ENCODE measurements at regions of chr19 and their contacts with region 1.

Region 1: DNA sequence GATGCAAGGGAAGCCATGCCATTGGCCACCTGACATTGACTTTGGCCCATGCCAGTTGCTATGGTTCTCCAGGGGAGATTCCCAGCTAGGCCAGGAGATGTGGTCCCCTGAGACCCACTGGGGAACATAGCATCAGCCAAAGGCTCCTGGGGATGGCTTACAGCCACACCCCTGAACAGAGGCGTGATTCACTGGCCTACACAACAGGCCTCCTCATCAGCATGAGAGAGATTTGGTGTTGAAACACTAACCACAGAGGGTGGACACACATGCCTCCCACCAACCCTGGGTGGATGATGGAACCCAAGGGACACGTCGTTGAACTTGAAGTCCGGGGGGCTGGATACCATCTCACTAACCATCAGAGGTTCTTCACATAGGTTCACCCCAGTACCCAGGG is 14.4 kb downstream of the IQCN start:
- DNase-seq: no peak
- H3K4me3 ChIP-seq: no peak overlapping the region
- H3K27ac ChIP-seq: no peak overlapping the region
- H3K4me1 ChIP-seq: no peaks in the 10 kb centered on the region
- H3K27me3 ChIP-seq: no peaks in the 10 kb centered on the region
- CTCF ChIP-seq: no peak
- POLR2A ChIP-seq: no peak

Region 2: DNA sequence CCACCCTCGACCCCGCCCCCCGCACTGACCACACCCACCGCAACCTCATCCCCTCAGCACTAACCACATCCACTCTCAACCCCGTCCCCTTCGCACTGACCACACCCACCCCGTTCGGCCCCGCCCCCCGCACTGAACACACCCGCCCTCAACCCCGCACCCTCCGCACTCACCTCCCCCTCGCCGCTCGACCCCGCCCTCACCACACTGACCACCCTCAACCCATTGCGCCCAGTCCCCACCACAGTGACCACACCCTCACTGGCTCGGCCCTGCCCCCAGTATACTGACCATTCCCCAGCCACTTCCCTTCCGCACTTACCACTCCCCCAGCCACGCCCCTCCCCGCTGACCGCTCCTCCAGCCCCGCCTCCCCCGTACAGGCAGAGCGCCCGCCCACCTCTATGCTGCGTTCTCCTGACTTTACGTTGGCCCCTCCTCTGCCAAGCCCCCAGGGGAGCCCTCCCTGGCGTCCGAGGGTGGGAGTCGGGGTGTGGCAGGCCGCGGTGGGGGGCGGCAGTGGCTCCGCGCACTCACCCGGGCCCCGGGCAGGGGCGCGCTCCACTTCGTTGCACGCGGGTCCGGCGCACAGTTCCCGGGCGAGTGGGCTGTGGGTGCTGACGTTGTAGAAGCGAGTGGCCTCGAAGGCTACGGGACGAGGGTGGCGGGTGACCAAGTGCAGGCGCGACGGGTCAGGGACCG is 1362.6 kb before region 1 on chr19:
- intact Hi-C with region 1: no loop called
- DNase-seq: peak; percentile 95 to 98
- H3K4me3 ChIP-seq: peak overlapping the region; percentile 54 to 81 (median 62)
- H3K27ac ChIP-seq: peak overlapping the region; percentile 85 to 87
- H3K4me1 ChIP-seq: no peaks in the 10 kb centered on the region
- H3K27me3 ChIP-seq: no peaks in the 10 kb centered on the region
- CTCF ChIP-seq: no peak
- POLR2A ChIP-seq: no peak

Region 3: DNA sequence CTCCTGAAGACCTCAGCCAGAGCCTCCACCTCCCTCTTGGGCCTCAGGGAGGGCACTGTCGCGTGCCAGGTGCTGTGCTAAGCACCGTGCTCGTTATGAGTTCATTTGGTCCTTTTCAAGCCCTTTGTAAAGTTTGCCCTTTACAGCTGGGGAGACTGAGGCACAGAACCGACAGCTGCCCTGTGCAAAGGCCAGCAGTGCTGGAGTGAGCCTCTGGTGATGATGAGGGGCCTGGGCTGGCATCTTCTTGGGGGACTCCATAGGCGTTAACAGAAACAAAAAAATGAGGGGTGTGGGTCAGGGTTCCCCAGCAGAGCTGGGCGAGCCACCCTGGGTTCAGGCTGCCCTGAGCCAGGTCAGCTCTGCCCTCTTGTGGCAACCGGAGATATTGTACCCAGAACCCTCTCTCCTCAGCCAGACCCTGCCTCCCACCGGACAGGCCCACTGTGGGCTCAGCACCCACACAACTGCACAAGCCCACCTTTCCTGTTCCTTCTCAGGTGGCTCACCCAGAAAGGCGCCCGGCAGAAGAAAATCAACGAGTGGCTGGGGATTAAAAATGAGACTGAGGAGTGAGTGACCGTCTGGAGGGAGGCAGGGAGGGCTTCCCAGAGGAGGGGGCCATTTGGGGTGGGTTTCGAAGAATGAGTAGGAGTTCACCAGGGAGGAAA is 91.8 kb before region 1 on chr19:
- intact Hi-C with region 1: no loop called
- DNase-seq: no peak
- H3K4me3 ChIP-seq: no peak overlapping the region
- H3K27ac ChIP-seq: no peak overlapping the region
- H3K4me1 ChIP-seq: no peaks in the 10 kb centered on the region
- H3K27me3 ChIP-seq: no peaks in the 10 kb centered on the region
- CTCF ChIP-seq: peak; percentile 42 to 70 (median 70)
- POLR2A ChIP-seq: no peak

Region 4: DNA sequence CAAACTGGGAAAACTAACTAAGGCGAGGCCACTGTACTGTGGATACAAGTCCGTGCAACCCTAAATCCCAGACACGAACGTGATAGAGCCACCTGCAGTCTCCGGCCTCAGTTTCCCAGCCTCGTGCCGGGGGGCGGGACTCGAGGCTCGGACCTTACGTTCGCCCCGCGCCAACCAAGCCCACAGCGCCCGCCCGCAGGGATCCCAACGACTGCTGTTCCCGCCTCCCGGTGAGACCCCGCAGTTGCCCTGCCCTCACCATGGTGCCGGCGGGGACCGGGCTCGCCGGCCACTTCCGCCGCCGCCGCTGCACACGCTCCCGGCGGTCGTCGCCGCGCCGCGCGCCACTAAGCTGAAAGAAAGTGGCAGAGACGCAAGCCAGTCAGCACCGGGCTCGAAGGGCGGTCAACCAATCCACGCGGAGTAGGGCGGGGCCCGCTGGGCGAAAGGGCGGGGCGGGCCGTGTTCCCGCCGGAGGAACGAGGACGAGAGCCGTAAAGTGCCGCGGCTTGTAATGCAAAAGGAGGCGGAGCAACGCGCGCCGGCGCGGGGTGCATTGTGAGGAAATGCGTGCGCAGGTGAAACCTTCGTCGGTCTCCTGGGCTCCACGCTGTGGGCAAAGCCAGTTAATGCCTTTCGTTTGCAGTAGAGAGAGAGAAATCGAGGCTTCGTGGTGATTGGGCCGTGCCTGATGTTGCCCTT is 63.0 kb after region 1 on chr19 and contains the start of gene LSM4:
- intact Hi-C with region 1: no loop called
- DNase-seq: peak; percentile 98 to 99
- H3K4me3 ChIP-seq: peak within 1 kb of the TSS; percentile 71 to 90 (median 86)
- H3K27ac ChIP-seq: peak within 1 kb of the TSS; percentile 87 to 96
- H3K4me1 ChIP-seq: no peaks in the 10 kb centered on the region
- H3K27me3 ChIP-seq: no peaks in the 10 kb centered on the region
- CTCF ChIP-seq: peak in 1 of 3 donors; percentile 42
- POLR2A ChIP-seq: peak; percentile 53
- total RNA-seq, gene LSM4: 83.0 to 122 (median 120) TPM

Region 5: DNA sequence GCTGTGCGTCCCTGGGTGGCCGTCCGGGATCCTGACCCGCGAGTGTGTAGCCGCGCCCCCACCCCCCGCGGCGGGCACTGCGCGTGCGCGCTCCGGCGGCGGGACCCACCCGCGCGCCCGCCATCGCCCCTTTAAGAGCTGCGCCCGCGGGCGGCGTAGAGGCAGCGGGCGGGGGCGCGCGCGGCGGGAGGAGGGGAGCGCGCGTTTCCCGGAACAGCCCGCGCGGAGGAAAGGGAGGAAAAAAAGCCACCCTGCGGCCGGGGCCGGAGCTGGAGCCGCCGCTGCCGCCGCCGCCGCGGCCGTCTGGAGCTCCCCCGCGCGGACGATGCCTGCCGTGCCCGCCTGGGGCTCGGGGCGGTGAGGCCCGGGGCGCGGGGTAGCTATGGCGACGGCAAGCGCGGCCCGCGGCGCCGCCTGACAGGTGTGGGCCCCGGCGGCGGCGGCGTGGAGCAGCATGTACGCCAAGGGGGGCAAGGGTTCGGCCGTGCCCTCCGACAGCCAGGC is 159.4 kb after region 1 on chr19 and contains the start of gene SSBP4:
- intact Hi-C with region 1: loop called (anchors 10 kb)
- DNase-seq: no peak
- H3K4me3 ChIP-seq: peak within 1 kb of the TSS; percentile 58 to 96 (median 73)
- H3K27ac ChIP-seq: peak within 1 kb of the TSS; percentile 91 to 92
- H3K4me1 ChIP-seq: peaks cover 22 to 34% of the 10 kb centered on the region in 2 donors
- H3K27me3 ChIP-seq: no peaks in the 10 kb centered on the region
- CTCF ChIP-seq: peak in 1 of 3 donors; percentile 70
- POLR2A ChIP-seq: no peak
- total RNA-seq, gene SSBP4: 29.4 to 71.8 (median 46.7) TPM

Measured in breast epithelium (tissue), 4 donors.